ENCODE measurements at regions of chr11 and their contacts with region 1.

Region 1: GRCh38 chr11:406978-407739 is 7.6 kb downstream of the SIGIRR start:
- DNase-seq: no peak
- ATAC-seq: peak; percentile 79
- H3K4me3 ChIP-seq: peak overlapping the region; percentile 79 to 84
- H3K27ac ChIP-seq: peak overlapping the region; percentile 85
- H3K4me1 ChIP-seq: peaks cover 30% of the 10 kb centered on the region
- H3K27me3 ChIP-seq: no peaks in the 10 kb centered on the region
- CTCF ChIP-seq: peak; percentile 31; the same call in 1 of the 2 replicates

Region 2: DNA sequence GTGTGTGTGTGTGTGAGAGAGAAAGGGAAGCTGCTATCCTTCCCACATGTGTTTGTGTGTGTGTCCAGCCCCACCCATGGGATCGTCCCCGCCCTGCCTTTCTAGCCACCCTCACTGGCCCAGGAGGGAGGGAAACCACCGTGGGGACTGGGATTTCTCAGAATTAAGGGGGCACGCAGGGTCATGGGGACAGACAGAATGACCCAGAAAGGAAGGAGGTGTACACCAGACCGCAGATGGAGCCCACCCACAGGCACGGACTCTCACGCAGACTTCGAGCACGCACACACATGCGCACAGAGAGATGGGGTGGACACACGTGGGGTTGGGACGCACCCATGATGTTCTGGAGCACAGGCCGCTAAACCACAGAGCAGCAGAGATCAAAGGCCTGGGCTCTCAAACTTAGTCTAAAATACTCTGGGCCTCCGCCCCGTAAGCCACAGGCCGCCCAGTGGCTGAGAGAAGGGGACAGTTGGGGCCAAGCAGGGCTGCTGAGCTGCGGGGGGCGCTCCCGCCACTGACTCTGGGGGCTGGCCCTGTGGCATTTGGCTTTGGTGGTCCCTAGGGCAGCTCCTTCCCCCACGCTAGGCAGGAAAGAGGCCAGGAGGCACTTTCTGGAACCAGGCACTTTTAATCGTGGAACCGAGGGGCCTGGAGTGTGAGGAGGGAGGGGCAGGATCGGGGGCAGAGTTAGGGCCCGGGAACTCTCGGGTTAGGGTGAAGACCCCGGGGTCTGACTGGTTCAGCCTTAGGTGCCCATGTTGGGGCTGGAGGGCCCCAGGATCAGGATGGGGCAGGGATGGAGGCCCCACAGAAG is 109.4 kb before region 1 on chr11:
- CTCF ChIA-PET with region 1: no interaction called
- POLR2A ChIA-PET with region 1: no interaction called
- in situ Hi-C with region 1: no loop called
- intact Hi-C with region 1: no loop called
- DNase-seq: no peak
- ATAC-seq: peak; percentile 15
- H3K4me3 ChIP-seq: no peak overlapping the region
- H3K27ac ChIP-seq: peak overlapping the region; percentile 35
- H3K4me1 ChIP-seq: peaks cover 42% of the 10 kb centered on the region
- H3K27me3 ChIP-seq: no peaks in the 10 kb centered on the region
- CTCF ChIP-seq: no peak

Region 3: DNA sequence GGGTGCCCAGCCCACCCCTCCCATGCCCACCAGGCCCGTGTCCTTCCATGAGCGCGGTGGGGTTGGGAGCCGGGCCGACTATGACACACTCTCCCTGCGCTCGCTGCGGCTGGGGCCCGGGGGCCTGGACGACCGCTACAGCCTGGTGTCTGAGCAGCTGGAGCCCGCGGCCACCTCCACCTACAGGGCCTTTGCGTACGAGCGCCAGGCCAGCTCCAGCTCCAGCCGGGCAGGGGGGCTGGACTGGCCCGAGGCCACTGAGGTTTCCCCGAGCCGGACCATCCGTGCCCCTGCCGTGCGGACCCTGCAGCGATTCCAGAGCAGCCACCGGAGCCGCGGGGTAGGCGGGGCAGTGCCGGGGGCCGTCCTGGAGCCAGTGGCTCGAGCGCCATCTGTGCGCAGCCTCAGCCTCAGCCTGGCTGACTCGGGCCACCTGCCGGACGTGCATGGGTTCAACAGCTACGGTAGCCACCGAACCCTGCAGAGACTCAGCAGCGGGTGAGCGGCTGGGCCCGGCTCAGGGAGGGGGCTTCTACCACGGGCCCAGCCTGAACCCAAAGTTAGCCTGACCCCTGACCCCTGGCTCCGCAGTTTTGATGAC is 10.1 kb before region 1 on chr11:
- CTCF ChIA-PET with region 1: interaction called, 8 read pairs
- POLR2A ChIA-PET with region 1: interaction called, 15 read pairs
- in situ Hi-C with region 1: no loop called
- intact Hi-C with region 1: no loop called
- DNase-seq: no peak
- ATAC-seq: no peak
- H3K4me3 ChIP-seq: peak overlapping the region in 1 of 2 experiments; percentile 1; a peak in 1 of 4 replicates
- H3K27ac ChIP-seq: no peak overlapping the region
- H3K4me1 ChIP-seq: peaks cover 46% of the 10 kb centered on the region
- H3K27me3 ChIP-seq: no peaks in the 10 kb centered on the region
- CTCF ChIP-seq: peak; percentile 4; the same call in 1 of the 2 replicates

Measured in Panc1 (cell line).